Breast epithelium (tissue), 4 donors: ENCODE measurements at regions of chr12 and their contacts with region 1.

Region 1: GRCh38 chr12:104460973-104461698 is 4.4 kb downstream of the CHST11 start:
- DNase-seq: no peak
- H3K4me3 ChIP-seq: no peak overlapping the region
- H3K27ac ChIP-seq: no peak overlapping the region
- H3K4me1 ChIP-seq: no peaks in the 10 kb centered on the region
- H3K27me3 ChIP-seq: no peaks in the 10 kb centered on the region
- CTCF ChIP-seq: no peak
- POLR2A ChIP-seq: no peak

Region 2: GRCh38 chr12:104767261-104767660 is 306.1 kb after region 1 on chr12:
- intact Hi-C with region 1: loop called (anchors 2 kb)
- DNase-seq: no peak
- H3K4me3 ChIP-seq: no peak overlapping the region
- H3K27ac ChIP-seq: no peak overlapping the region
- H3K4me1 ChIP-seq: no peaks in the 10 kb centered on the region
- H3K27me3 ChIP-seq: no peaks in the 10 kb centered on the region
- CTCF ChIP-seq: no peak
- POLR2A ChIP-seq: no peak